ENCODE measurements at regions of chr5 and their contacts with region 1.

Region 1: DNA sequence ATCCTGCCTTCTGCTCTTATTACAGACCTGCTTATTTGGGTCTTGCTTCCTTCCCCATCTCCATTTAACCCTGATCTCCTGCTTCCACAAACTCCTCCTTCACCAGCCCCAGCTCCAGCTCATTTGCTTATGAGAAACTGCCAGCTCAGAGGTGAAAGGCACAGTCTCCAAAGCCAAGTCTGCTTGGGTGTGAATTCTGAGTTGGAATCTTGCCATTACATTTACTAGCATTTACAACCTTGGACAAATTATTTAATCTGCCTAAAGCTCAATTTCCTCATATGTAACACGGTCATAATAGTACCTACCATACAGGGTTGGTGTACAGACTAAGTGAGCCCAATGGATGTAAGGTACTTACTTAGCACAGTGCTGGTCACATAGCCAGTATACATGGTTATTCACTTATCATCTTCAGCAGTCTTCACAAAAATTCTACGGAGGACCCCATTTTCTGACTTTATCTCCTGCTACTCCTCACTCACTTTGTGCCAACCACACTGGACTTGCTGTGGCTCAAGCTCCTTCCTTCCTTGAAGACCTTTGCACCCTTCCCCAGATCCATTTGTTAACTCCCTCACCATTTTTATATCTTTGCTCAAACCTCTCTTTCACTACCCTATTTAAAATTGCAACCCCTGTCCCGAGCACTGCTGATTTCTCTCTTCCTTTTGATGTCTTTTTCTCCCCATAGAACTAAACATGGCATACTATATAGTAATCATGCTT is 86.2 kb downstream of the DOCK2 start:
- DNase-seq: no peak
- ATAC-seq: no peak
- H3K4me3 Mint-ChIP-seq: no peak overlapping the region
- H3K27ac Mint-ChIP-seq: no peak overlapping the region
- H3K4me1 Mint-ChIP-seq: no peaks in the 10 kb centered on the region
- H3K27me3 Mint-ChIP-seq: no peaks in the 10 kb centered on the region
- CTCF ChIP-seq: no peak

Region 2: DNA sequence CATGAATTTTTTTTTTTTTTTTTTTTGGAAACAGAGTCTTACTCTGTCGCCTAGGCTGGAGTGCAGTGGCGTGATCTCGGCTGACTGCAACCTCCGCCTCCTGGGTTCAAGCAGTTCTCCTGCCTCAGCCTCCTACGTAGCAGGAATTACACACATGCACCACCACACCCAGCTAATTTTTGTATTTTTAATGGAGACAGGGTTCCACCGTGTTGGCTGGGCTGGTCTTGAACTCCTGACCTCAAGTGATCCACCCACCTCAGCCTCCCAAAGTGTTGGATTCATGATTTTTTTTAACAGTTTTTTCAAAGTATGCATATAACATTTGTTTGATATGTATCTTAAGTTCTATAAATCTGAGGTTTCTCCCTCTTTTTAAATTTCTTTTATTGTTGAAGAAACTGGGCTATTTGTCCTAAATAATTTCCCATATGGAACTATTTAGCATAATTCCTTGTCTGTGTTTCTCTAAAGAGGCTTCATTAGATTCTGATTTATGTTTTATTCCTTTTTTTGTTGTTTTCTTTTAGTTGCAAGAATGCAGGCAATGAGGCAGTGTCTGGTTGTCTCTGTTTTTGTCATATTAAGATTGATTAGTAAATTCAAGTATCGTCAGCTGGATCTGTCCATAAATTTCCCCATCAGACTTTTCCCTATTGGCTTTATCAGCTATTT is 1220.6 kb before region 1 on chr5:
- CTCF ChIA-PET with region 1: no interaction called
- POLR2A ChIA-PET with region 1: interaction called, 10 read pairs
- intact Hi-C with region 1: no loop called
- DNase-seq: no peak
- ATAC-seq: no peak
- H3K4me3 Mint-ChIP-seq: no peak overlapping the region
- H3K27ac Mint-ChIP-seq: no peak overlapping the region
- H3K4me1 Mint-ChIP-seq: no peaks in the 10 kb centered on the region
- H3K27me3 Mint-ChIP-seq: no peaks in the 10 kb centered on the region
- CTCF ChIP-seq: no peak